PC-3 (cell line): ENCODE measurements at regions of chr13 and their contacts with region 1.

Region 1: DNA sequence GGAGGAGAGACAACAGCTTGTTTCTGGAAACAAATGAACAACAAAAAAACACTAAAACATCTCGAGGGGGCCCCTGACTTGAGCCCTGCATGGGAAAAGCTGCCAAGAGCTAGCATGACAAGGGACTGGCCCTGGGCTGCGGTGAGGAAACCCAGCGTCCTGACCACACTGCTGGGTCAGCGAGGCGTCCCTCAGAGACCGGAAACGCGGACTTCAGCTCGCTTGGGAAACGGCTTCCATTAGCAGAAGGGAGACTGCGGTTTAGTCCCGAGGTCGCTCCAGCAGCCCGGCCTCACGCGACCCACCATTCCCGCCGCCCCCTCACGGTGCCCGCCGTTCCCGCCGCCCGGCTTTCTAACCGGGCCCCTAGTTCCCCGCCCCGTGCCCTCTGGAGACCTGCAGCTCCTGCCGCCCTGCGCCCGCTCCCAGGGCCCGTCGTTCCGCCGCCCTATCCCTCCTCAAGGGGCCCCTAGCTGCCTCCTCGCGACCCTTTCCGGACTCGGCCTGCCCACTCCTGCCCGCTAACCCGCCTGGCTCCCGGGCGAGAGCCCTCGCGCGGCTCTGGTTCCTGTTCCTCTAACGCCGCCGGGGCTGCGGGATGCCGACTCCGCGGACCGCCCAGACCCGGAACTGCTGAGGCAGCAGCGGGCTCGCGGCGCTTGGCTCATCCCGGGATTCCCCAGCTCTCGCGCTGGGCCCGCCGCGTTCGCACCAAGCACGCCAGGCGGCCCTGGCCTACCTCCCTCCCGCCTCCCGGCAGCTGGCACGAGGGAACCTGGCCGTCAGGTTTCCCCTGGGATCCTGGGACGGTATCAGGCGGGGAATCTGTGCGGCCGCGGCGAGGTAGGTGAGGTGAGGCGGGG is at the start of gene CCDC122:
- DNase-seq: peak; percentile 70
- ATAC-seq: peak; percentile 74
- H3K4me3 ChIP-seq: peak within 1 kb of the TSS; percentile 70
- H3K27ac ChIP-seq: peak within 1 kb of the TSS; percentile 76
- H3K4me1 ChIP-seq: peaks cover 45% of the 10 kb centered on the region
- H3K27me3 ChIP-seq: no peaks in the 10 kb centered on the region
- CTCF ChIP-seq: no peak
- total RNA-seq, gene CCDC122: 4.6 TPM in 2 replicates

Region 2: DNA sequence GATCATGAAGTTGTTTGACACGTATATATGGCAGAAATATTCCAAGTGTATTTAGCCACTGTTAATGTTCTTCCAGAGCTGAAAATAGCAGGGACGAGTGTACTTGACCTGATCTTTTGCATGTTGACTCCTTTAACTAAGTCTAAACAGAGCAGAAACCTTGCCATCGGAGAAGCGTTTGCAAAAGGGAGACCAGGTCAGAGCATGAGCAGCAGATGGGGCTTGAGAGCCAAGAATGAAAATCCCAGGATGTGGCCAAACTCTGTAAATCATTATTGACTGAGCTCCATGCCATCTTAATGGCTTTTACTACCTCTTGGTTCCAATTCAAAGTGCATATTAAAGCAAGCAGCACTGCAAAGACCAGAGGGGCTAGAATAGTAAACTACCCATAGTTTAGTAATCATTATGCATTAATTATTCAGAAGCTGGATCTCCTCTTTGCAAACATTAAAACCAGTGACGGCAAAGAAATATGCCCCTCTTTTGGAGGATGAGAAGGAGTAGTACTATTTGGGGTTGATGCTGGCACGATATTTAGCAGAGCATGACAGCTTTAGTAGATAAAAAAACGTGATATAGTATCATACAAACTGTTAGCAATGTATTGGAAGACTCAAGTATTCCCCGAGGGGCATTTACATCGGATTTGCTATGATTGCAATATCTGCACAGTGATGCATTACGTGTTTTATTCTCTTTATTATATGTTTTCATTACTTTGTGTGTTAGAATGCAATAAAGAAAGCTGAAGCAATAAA is 1042.0 kb before region 1 on chr13:
- CTCF ChIA-PET with region 1: no interaction called
- POLR2A ChIA-PET with region 1: no interaction called
- intact Hi-C with region 1: loop called (anchors 5 kb)
- DNase-seq: peak; percentile 46
- ATAC-seq: peak; percentile 58
- H3K4me3 ChIP-seq: no peak overlapping the region
- H3K27ac ChIP-seq: no peak overlapping the region
- H3K4me1 ChIP-seq: peaks cover 13% of the 10 kb centered on the region
- H3K27me3 ChIP-seq: no peaks in the 10 kb centered on the region
- CTCF ChIP-seq: peak; percentile 57

Region 3: DNA sequence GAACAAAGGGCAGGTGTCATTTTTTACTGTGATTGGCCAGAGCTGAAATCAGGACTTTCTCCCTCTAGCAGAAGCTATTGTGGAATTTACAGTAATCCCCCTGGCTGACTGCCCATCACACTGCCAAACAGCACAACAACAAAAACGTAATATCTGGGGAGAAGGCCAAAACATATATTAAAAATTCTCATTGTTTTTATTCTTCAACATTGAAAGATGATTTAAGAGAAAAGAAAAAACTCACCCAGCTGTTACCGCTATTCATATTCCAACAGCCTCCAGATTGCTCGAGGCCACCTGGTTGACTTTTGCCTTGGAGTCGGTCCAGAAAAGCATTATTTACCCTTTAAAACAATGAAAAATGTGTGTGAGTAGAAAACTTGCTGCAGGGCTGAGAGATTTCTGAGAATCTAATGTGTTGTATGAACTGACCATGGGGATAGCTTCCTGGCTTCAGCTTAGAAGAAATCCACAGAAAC is 984.3 kb before region 1 on chr13:
- CTCF ChIA-PET with region 1: no interaction called
- POLR2A ChIA-PET with region 1: interaction called, 12 read pairs
- intact Hi-C with region 1: no loop called
- DNase-seq: peak; percentile 51
- ATAC-seq: no peak; the same call in 1 of the 2 replicates
- H3K4me3 ChIP-seq: no peak overlapping the region
- H3K27ac ChIP-seq: no peak overlapping the region
- H3K4me1 ChIP-seq: peaks cover 24% of the 10 kb centered on the region
- H3K27me3 ChIP-seq: no peaks in the 10 kb centered on the region
- CTCF ChIP-seq: no peak

Region 4: DNA sequence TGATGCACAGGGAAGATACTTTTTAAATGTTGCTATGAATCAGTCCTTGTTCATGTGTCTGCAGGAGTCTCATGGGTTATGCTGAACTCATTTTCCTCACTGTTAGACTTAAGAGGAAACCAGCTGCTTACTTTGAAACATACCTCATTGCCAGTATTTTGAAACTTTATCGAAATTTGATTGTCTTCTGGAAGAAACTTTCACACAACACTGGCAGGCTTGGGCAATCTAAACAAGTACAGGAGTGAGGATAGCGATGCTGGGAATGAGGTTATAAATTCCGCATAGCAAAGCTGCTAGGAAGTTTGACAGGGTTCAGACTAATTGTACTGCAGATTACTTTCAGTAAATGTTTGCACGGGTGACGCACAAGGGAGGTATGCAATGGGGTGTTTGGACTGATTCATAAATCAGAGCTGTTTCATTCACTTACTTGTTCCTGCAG is 610.1 kb before region 1 on chr13:
- CTCF ChIA-PET with region 1: no interaction called
- POLR2A ChIA-PET with region 1: no interaction called
- intact Hi-C with region 1: loop called (anchors 10 kb)
- DNase-seq: peak; percentile 90
- ATAC-seq: peak; percentile 94
- H3K4me3 ChIP-seq: peak overlapping the region; percentile 43
- H3K27ac ChIP-seq: peak overlapping the region; percentile 80
- H3K4me1 ChIP-seq: peaks cover 38% of the 10 kb centered on the region
- H3K27me3 ChIP-seq: no peaks in the 10 kb centered on the region
- CTCF ChIP-seq: no peak

Region 5: GRCh38 chr13:43303033-43303729 is 575.9 kb before region 1 on chr13:
- CTCF ChIA-PET with region 1: no interaction called
- POLR2A ChIA-PET with region 1: no interaction called
- intact Hi-C with region 1: loop called (anchors 10 kb)
- DNase-seq: peak; percentile 50
- ATAC-seq: peak; percentile 59
- H3K4me3 ChIP-seq: no peak overlapping the region
- H3K27ac ChIP-seq: no peak overlapping the region
- H3K4me1 ChIP-seq: peaks cover 14% of the 10 kb centered on the region; the same call in 1 of the 2 replicates
- H3K27me3 ChIP-seq: no peaks in the 10 kb centered on the region
- CTCF ChIP-seq: peak; percentile 56

Region 6: DNA sequence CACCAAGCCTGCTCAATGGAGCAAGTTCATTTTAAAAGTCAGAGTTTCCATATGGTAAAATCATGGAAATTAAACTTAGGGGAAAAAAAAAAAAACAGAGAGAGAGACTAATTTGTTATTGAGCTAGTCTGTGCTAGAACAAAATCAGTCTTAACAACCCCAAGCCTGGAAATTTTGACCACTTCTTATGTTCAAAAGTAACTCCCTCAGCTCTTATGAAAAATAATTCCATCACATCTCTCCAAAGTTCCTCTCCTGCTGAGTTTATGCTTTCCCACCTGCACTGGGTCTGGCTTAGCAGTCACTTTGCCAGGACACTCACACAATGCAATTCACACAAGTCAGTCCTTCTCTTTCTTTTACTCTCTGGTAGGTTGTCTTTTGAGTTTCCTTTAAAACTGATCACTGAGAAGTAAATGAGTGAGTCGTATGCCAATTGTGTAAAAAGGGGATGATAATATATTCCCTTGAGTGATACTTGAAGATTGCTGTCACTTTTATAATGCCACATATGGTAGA is 184.9 kb before region 1 on chr13:
- CTCF ChIA-PET with region 1: no interaction called
- POLR2A ChIA-PET with region 1: interaction called, 11 read pairs
- intact Hi-C with region 1: no loop called
- DNase-seq: no peak
- ATAC-seq: no peak
- H3K4me3 ChIP-seq: no peak overlapping the region
- H3K27ac ChIP-seq: no peak overlapping the region
- H3K4me1 ChIP-seq: no peaks in the 10 kb centered on the region
- H3K27me3 ChIP-seq: no peaks in the 10 kb centered on the region
- CTCF ChIP-seq: no peak

Region 7: DNA sequence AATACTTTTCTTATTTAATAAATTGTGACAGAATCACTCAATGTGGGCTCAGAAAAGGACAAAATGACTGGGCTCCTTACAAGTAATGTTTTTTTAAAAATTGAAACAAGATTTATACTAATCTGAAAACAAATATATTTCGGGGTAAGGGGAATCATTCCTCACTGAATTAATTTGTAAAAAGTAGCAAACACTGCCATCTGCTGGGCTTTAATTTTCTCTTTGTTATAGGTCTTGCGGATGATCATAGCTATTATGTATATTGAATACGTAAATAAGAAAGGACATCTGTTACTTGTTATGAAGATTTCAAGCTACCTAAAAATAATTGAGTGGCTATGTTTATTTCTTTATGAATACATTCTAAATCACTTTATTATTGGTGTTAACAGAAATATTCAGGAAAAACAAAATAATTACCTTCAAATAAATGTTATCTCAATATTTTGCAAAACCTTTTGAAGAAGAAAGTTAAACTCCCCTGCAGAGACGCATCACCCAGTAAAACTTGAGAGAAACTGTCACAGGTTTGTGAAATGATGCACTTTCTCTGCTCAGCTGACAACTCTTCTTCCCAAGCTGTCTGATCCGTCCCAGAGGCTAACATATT is 74.6 kb before region 1 on chr13:
- CTCF ChIA-PET with region 1: no interaction called
- POLR2A ChIA-PET with region 1: no interaction called
- intact Hi-C with region 1: loop called (anchors 2 kb)
- DNase-seq: peak; percentile 82
- ATAC-seq: peak; percentile 66
- H3K4me3 ChIP-seq: peak overlapping the region; percentile 63
- H3K27ac ChIP-seq: peak overlapping the region; percentile 95
- H3K4me1 ChIP-seq: peaks cover 29% of the 10 kb centered on the region
- H3K27me3 ChIP-seq: no peaks in the 10 kb centered on the region
- CTCF ChIP-seq: peak; percentile 63

Region 8: DNA sequence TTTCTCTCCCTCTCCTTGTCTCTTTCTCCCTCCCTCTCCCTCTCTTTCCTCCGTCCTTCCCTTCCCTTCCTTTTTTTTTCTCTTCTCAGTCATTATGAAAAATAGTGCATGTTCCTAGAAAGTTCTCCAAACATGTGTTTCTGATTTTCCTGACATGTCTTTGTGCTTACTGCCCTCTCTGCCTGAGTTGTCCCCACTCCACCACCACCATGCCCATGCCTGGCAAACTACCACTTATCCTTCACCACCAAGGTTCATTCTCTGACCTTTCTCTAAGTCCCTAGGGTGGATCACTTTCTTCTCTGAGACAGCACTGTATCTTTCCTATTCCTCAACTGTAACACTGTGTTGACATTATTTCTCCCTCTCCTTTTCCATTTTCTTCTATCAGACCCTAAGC is 98.8 kb after region 1 on chr13:
- CTCF ChIA-PET with region 1: no interaction called
- POLR2A ChIA-PET with region 1: no interaction called
- intact Hi-C with region 1: no loop called
- DNase-seq: no peak
- ATAC-seq: no peak
- H3K4me3 ChIP-seq: no peak overlapping the region
- H3K27ac ChIP-seq: no peak overlapping the region
- H3K4me1 ChIP-seq: no peaks in the 10 kb centered on the region
- H3K27me3 ChIP-seq: no peaks in the 10 kb centered on the region
- CTCF ChIP-seq: no peak